ENCODE measurements at regions of chr1 and their contacts with region 1.

Region 1: GRCh38 chr1:218616681-218617080 is 271.5 kb downstream of the TGFB2 start:
- DNase-seq: no peak
- H3K4me3 ChIP-seq: no peak overlapping the region
- H3K27ac ChIP-seq: no peak overlapping the region
- H3K4me1 ChIP-seq: peaks cover 23% of the 10 kb centered on the region
- H3K27me3 ChIP-seq: no peaks in the 10 kb centered on the region
- CTCF ChIP-seq: no peak

Region 2: DNA sequence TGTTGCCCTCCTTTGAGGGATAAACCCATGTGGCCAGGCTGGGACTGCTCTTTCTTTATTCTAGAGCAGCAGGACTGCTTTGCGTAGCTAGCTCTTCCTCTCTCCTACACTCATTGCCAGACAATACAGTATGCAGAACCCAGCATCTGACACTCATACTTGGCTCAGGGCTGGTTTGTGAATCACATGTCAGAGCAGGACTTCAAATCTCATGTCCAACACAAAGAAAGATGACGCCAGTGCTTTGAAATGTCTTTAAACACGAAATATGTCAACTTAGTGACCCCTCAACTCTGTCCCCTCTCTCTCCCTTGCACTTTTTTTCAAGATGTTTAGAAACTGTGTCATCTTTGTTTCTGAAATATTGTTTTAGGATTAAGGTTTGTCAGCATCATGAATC is 136.5 kb before region 1 on chr1:
- CTCF ChIA-PET with region 1: no interaction called
- dilution Hi-C with region 1: no loop called
- in situ Hi-C with region 1: no loop called
- intact Hi-C with region 1: no loop called
- DNase-seq: peak; percentile 92
- H3K4me3 ChIP-seq: no peak overlapping the region
- H3K27ac ChIP-seq: peak overlapping the region; percentile 93
- H3K4me1 ChIP-seq: peaks cover 54% of the 10 kb centered on the region
- H3K27me3 ChIP-seq: no peaks in the 10 kb centered on the region
- CTCF ChIP-seq: no peak

Region 3: DNA sequence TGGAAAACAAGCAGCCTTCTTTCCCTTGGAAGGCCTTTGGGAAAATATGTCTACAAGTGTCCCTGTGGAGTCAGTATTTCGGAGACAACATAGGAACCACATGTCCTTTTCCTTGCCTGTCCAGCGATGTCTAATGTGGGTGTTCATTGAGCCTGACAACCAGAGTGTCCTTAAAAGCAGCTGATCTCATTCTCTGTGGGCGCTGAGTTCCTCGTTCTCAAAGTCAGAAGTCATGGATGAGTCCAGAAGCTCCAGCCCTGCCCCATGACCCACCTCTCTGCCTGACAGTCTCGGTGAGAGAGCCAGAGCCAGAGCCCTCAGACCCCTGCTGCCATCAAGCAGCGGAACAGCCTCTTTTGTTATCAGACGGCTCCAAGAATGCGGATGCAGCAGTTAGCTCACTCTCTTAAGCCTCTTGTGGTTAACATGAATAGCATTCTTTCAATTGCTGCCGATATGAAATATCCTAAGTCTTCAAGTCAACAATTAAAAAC is 57.6 kb after region 1 on chr1:
- CTCF ChIA-PET with region 1: no interaction called
- dilution Hi-C with region 1: loop called (anchors 5 kb)
- in situ Hi-C with region 1: no loop called
- intact Hi-C with region 1: no loop called
- DNase-seq: no peak
- H3K4me3 ChIP-seq: no peak overlapping the region
- H3K27ac ChIP-seq: peak overlapping the region; percentile 28
- H3K4me1 ChIP-seq: peaks cover 38% of the 10 kb centered on the region
- H3K27me3 ChIP-seq: no peaks in the 10 kb centered on the region
- CTCF ChIP-seq: peak in 1 of 2 donors; percentile 25

Measured in mammary epithelial cell (primary cell).